ENCODE measurements at regions of chr11 and their contacts with region 1.

Region 1: DNA sequence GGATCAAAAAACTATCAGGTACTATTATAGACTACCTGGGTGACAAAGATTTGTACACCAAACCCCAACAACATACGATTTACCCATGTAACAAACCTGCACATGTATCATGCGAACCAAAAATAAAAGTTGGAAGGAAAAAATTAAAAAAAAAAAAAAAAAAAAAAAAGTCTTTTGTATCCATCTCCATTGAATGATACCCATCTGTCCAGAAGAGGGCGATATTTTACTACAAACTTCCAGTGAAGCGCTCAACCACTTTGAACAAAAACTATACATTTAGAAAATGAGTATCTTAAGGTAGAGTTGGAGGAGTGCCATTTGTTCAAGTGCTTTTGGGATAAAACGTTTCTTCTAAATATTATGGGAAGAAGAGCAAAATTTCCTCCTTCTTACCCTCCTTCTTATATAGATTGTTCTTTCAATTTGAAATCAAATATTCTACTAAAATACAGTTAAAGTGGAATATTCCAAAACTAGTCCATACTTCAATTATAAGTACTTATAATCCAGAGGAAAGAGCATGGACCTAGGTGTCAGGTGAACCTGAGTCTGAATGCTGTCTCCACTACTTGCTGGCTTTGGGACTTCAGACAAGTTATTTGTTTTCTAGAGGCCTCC is 23.3 kb downstream of the ARL14EP start:
- DNase-seq: no peak
- ATAC-seq: no peak

Region 2: DNA sequence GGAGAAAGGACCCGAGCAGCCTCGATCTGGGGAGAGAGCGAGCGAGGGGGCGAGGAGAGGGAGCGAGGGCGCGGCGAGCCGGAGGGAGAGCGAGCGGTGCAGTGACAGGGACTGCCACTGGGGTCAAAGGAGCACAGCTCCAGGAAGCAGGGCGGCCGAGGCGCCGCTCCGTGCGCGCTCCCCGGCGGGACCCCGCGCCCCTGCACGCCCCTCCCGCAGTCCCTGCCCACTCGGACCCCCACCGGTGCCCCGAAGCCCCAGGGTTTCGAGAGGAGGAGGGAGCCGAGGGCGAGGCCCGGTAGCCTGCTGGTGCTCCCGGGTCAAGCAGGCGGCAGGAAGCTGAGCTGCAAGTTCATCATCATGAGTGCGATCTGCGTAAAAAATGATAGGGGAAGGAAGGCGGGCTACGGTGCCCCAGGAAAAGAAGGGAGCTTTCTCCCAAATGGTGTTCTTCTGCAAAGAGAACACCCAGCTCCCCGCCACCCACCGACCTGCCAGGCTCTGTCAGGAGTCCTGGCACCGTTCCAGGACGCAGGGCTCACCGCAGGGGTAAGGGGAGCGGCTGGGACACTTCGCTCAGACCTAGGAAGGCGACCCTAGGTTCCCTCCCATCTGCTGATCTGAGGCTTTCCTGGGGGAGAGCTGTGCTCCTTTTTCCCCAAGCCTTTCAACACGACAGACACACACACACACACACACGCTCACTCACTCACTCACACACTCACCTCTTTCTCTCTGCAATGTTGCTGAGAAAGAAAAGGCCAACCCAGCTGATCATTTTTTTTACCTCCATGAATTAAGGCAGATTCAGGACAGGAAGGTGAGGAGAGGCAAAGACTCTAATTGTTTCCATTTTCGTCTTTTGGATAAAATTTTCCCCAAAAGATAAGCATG is 240.3 kb after region 1 on chr11 and contains the start of gene MPPED2:
- intact Hi-C with region 1: loop called (anchors 5 kb)
- DNase-seq: peak; percentile 76
- ATAC-seq: peak; percentile 91
- total RNA-seq, gene MPPED2: 9.7 TPM

Region 3: DNA sequence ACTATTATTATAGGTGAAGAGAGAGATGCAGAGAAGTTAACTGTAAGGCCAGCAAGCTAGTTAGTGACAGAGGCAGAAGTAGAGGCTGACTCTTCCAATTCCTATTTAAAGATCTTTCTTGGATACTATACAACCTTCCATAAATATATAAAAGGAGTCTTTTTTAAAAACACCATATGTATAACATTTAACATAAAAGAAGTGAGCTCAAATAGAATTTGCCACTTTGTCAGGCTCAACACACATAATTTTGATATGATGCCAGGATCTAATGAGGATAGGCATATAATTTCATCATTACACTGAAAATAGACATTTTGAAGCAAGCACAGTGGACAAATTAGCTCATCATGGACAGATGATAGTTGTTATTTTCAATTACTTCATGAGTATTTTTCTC is 304.1 kb after region 1 on chr11:
- intact Hi-C with region 1: loop called (anchors 2 kb)
- DNase-seq: no peak
- ATAC-seq: no peak

Region 4: GRCh38 chr11:30855383-30856006 is 509.3 kb after region 1 on chr11:
- intact Hi-C with region 1: loop called (anchors 2 kb)
- DNase-seq: no peak
- ATAC-seq: no peak

Measured in Right ventricle myocardium inferior (tissue), 1 donor.